ENCODE measurements at regions of chr2 and their contacts with region 1.

Region 1: GRCh38 chr2:127649684-127650040 is 3.7 kb downstream of the GPR17 start:
- DNase-seq: peak; percentile 38 to 96 (median 88)

Region 2: GRCh38 chr2:127701193-127701650 is 51.6 kb after region 1 on chr2 and contains the start of gene SFT2D3:
- intact Hi-C with region 1: loop called (anchors 5 kb)
- DNase-seq: peak; percentile 79 to 96 (median 93)

Region 3: DNA sequence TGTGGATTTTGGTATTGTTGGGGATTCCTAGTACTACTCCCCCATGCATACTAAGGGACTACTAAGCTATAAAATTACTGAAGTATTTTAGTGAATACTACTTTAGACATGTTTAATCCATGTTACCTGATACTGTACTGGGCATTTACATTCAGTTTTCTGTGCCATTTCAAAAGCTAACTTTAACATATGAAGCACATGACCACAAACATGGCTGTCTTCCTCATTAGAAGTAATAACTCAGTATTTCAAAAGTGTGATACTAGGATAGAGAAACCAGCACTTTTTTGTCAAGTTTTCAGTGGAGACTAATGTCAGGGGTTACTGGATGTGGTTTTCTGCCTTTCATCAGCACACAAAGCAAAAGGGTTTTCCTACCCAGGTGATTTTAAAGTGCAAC is 133.4 kb after region 1 on chr2:
- intact Hi-C with region 1: no loop called
- DNase-seq: no peak

Measured in head of caudate nucleus (tissue), 42 donors.